HepG2 (cell line): ENCODE measurements at regions of chr1 and their contacts with region 1.

Region 1: GRCh38 chr1:234875953-234876855 is 252.4 kb downstream of the TOMM20 start:
- DNase-seq: peak; percentile 98
- ATAC-seq: peak; percentile 74
- H3K4me3 ChIP-seq: peak overlapping the region; percentile 36 to 71 (median 49); a peak in 5 of 6 replicates
- H3K27ac ChIP-seq: peak overlapping the region; percentile 98
- H3K4me1 ChIP-seq: peaks cover 93% of the 10 kb centered on the region
- H3K27me3 ChIP-seq: no peaks in the 10 kb centered on the region; a peak in 1 of 5 replicates
- CTCF ChIP-seq: no peak; the same call in 1 of the 2 replicates
- EP300 ChIP-seq: peak; percentile 74 to 97; a peak in 3 of 4 replicates
- POLR2A ChIP-seq: peak; percentile 43 to 62; a peak in 2 of 4 replicates
- RAD21 ChIP-seq: peak; percentile 20; the same call in 1 of the 2 replicates

Region 2: DNA sequence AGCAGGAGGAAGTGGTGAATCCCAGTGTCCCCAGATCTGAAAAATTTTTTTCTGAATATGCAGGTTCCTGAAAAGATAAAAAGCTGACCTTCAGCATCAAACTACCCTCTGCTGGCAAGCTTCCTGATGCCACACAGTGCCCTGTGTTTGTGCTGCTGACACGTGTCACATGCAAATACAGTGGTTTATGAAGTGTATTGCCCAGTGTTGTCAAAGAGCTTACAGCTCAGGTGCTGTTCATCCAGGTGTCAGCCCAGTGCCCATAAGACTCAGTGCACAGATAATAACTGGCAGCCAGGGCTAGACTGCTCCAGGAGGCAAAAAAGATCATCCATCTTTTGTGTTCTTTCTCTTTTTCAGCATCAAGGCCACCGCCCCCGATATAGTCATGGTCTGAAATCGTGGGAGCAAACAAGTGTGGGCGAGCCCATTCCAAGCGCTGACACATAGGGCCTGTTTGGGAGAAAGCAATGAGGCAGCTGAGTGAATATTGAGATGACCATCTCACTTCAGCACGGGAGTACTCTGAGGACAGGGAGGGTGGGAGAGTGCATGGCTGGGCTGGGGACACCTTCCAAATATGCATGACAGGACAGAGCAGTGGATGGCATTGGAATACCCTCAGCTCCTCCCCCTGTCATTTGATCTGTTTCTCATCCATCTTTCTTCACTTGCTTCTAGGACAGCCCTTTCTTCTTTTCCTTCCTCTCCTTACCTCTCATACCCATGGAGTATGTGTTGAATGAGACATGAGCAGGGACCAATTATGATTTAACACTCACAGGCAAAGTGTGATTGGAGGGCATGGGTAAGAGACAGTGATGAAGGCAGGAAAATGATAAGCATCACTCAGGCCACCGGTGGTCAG is 1268.7 kb before region 1 on chr1:
- CTCF ChIA-PET with region 1: no interaction called
- POLR2A ChIA-PET with region 1: no interaction called
- in situ Hi-C with region 1: no loop called
- intact Hi-C with region 1: no loop called
- DNase-seq: no peak
- ATAC-seq: no peak
- H3K4me3 ChIP-seq: no peak overlapping the region
- H3K27ac ChIP-seq: no peak overlapping the region
- H3K4me1 ChIP-seq: no peaks in the 10 kb centered on the region
- H3K27me3 ChIP-seq: 0 out of 5 replicates have a peak, but pooled peaks cover 0 to 4% of the 10 kb centered on the region in 2 experiments
- CTCF ChIP-seq: no peak
- EP300 ChIP-seq: no peak
- POLR2A ChIP-seq: no peak
- RAD21 ChIP-seq: no peak

Region 3: DNA sequence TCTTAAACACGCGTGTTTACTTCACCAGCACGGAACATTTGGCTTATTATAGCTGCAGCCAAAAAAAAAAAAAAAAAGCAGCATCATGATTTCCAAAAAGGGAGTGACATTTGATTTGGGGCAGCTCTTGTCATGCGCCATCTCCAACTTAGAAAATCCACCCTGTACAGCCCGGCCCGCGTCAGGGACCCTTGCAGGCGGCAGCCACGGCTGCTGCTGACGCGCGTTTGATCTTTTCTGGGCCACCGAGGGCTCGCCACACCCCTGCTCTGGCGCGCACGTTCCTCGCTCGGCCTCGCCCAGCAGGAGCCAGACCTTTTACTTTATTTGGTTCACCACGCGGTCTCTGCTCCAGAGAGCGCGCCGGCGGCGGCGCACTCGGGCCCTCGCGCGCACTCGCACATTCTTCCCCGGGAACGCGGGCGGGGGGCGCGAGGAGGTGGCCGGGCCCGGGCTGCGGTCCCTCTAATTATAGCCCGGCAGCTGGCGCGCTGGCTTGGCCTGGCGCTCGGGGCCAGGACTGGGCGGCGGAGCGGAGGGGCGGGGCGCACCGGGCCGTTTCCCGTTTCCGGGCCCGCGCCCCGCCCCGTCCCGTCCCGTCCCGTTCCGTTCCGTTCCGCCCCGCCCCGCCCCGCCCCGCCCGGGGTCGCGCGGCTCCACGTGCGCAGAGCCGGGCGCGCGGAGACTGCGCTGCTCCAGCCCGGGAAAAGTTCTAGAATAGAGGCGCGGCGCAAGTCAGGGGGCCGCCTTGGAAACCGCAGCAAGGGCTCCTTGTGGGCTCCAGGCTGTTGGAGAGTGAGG is 276.4 kb before region 1 on chr1:
- CTCF ChIA-PET with region 1: no interaction called
- POLR2A ChIA-PET with region 1: interaction called, 37 read pairs
- in situ Hi-C with region 1: no loop called
- intact Hi-C with region 1: no loop called
- DNase-seq: peak; percentile 85
- ATAC-seq: peak; percentile 85
- H3K4me3 ChIP-seq: peak overlapping the region; percentile 13 to 51 (median 44); a peak in 4 of 6 replicates
- H3K27ac ChIP-seq: peak overlapping the region; percentile 100
- H3K4me1 ChIP-seq: peaks cover 41% of the 10 kb centered on the region
- H3K27me3 ChIP-seq: no peaks in the 10 kb centered on the region; a peak in 1 of 5 replicates
- CTCF ChIP-seq: 0 out of 2 replicates have a peak, but pooled peaks have one; percentile 13
- EP300 ChIP-seq: no peak; a peak in 1 of 4 replicates
- POLR2A ChIP-seq: peak; percentile 26 to 63
- RAD21 ChIP-seq: peak; percentile 81

Region 4: DNA sequence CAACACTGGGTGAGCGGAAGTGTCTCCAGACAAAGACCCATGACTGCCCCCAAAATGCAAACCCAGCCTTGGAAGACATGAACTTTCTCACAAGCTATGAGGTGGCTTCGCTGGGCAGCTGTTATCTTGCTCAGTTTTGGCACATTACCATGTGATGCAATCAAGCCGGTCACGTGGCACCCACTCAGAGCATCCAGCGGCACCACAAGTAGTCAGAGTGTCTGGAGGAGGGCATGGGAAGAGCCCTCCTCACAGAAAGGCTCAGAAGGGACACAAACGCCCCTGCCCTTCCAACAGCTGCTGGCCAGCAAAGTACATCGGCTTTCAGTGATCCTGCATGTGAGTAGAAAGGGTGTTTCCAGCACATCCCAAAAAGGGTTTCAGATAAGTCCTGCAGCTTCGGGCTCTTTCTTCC is 120.7 kb before region 1 on chr1:
- CTCF ChIA-PET with region 1: no interaction called
- POLR2A ChIA-PET with region 1: interaction called, 12 read pairs
- in situ Hi-C with region 1: no loop called
- intact Hi-C with region 1: no loop called
- DNase-seq: no peak
- ATAC-seq: no peak
- H3K4me3 ChIP-seq: no peak overlapping the region
- H3K27ac ChIP-seq: no peak overlapping the region
- H3K4me1 ChIP-seq: peaks cover 55% of the 10 kb centered on the region
- H3K27me3 ChIP-seq: no peaks in the 10 kb centered on the region
- CTCF ChIP-seq: no peak
- EP300 ChIP-seq: no peak
- POLR2A ChIP-seq: no peak
- RAD21 ChIP-seq: no peak

Region 5: GRCh38 chr1:234862944-234863515 is 13.2 kb before region 1 on chr1:
- CTCF ChIA-PET with region 1: no interaction called
- POLR2A ChIA-PET with region 1: interaction called, 46 read pairs
- in situ Hi-C with region 1: no loop called
- intact Hi-C with region 1: no loop called
- DNase-seq: peak; percentile 65
- ATAC-seq: peak; percentile 86
- H3K4me3 ChIP-seq: peak overlapping the region; percentile 6 to 47 (median 27); a peak in 4 of 6 replicates
- H3K27ac ChIP-seq: peak overlapping the region; percentile 84
- H3K4me1 ChIP-seq: peaks cover 69% of the 10 kb centered on the region
- H3K27me3 ChIP-seq: no peaks in the 10 kb centered on the region
- CTCF ChIP-seq: no peak
- EP300 ChIP-seq: no peak; a peak in 1 of 4 replicates
- POLR2A ChIP-seq: peak in 1 of 2 experiments; percentile 37; a peak in 1 of 4 replicates
- RAD21 ChIP-seq: no peak

Region 6: DNA sequence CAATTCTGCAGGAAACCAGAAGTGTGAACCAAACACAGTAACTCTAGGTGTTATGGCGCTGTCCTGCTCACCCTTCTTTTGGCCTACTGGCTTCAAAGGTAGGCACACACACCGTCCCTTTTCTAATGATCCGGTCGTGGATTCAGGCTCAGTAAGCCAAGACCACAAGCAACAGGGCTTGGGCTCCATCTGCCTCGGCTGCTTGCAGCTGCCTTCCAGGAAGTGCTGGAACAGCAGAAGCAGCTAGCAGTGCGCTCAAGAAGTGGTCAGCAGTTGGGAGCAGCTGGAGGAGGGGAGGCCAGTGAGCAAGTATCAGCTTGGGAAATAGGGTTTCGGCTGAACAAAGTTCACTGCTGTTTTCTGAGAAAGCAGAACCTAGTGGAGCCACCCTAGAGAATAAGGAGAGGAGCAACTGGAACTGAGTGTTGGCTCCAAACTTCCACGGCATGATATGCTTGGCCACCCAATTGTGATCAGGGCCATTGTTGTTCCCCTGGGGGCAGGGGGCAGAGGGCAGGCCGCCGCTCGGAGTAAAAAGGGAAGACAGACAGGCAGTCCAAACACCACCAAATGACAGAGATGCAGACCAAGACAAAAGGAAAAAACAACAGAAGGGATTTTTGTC is 79.0 kb after region 1 on chr1:
- CTCF ChIA-PET with region 1: no interaction called
- POLR2A ChIA-PET with region 1: interaction called, 178 read pairs
- in situ Hi-C with region 1: loop called (anchors 5 kb)
- intact Hi-C with region 1: loop called (anchors 1 kb)
- DNase-seq: no peak
- ATAC-seq: peak; percentile 2; the same call in 1 of the 3 replicates
- H3K4me3 ChIP-seq: peak overlapping the region in 1 of 3 experiments; percentile 5; a peak in 1 of 6 replicates
- H3K27ac ChIP-seq: peak overlapping the region; percentile 100
- H3K4me1 ChIP-seq: peaks cover 85% of the 10 kb centered on the region
- H3K27me3 ChIP-seq: no peaks in the 10 kb centered on the region
- CTCF ChIP-seq: peak; percentile 5; the same call in 1 of the 2 replicates
- EP300 ChIP-seq: no peak; a peak in 1 of 4 replicates
- POLR2A ChIP-seq: 0 out of 4 replicates have a peak, but pooled peaks of 1 of the 2 experiments have one; percentile 36
- RAD21 ChIP-seq: 0 out of 2 replicates have a peak, but pooled peaks have one; percentile 10

Region 7: DNA sequence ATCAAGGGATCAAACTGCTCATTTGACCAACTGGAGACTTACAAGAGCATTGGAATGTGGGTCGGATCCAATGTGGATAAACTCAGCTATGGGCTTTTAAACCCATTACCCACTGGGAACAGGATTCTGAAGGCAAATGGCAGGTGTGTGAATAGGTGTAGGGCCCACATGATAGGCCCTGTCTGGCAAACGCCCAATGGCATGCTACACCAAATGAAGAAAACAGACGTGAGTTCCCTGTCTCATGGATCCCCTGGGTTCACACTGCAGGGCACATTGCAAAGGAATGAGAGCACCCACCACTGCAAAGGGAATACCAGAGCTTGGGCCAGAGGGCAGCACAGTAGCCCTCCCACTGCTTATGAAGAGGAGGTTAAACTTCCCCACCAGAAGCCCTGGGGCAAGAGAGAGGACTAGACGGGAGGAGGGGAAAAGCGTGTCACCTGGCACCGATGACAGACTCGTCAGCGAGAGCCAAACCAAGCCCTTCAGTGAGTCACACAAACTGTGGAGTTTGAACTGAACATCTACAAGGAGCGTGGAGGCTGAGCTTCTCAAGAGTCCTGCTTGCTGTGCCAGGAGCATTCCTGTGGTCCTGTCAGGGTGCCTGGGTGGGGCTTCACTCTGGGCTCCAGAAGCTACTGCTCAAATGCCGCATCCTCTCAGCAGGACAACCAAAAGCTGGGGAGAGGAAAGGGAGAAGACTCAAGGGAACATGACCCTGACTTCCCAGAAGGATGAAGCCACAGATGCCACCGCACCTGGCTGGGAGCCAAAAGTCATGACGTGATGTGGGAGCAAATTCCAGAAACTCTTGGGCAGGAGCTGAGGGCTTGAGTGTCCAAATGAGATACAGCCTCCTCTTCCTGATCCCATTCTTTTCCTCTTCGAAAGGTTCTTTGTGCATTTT is 191.3 kb after region 1 on chr1:
- CTCF ChIA-PET with region 1: no interaction called
- POLR2A ChIA-PET with region 1: interaction called, 33 read pairs
- in situ Hi-C with region 1: no loop called
- intact Hi-C with region 1: no loop called
- DNase-seq: peak; percentile 58
- ATAC-seq: peak; percentile 4; the same call in 2 of the 3 replicates
- H3K4me3 ChIP-seq: peak overlapping the region; percentile 41 to 76 (median 60); a peak in 5 of 6 replicates
- H3K27ac ChIP-seq: peak overlapping the region; percentile 86
- H3K4me1 ChIP-seq: peaks cover 97% of the 10 kb centered on the region
- H3K27me3 ChIP-seq: no peaks in the 10 kb centered on the region
- CTCF ChIP-seq: no peak
- EP300 ChIP-seq: no peak
- POLR2A ChIP-seq: peak in 1 of 2 experiments; percentile 21; a peak in 2 of 4 replicates
- RAD21 ChIP-seq: no peak